Heart left ventricle (tissue), 16 donors: ENCODE measurements at regions of chr9 and their contacts with region 1.

Region 1: GRCh38 chr9:13427587-13427986 is 148.1 kb upstream of the MPDZ start:
- DNase-seq: no peak
- ATAC-seq: peak in 2 of 4 donors; percentile 42 to 47
- H3K4me3 ChIP-seq: peak overlapping the region in 1 of 12 donors; percentile 12
- H3K27ac ChIP-seq: peak overlapping the region in 9 of 12 donors; percentile 0 to 63 (median 33)
- H3K4me1 ChIP-seq: peaks cover 0 to 23% (median 13%) of the 10 kb centered on the region in 12 donors
- H3K27me3 ChIP-seq: no peaks in the 10 kb centered on the region
- CTCF ChIP-seq: peak; percentile 68 to 88 (median 82)
- POLR2A ChIP-seq: no peak

Region 2: DNA sequence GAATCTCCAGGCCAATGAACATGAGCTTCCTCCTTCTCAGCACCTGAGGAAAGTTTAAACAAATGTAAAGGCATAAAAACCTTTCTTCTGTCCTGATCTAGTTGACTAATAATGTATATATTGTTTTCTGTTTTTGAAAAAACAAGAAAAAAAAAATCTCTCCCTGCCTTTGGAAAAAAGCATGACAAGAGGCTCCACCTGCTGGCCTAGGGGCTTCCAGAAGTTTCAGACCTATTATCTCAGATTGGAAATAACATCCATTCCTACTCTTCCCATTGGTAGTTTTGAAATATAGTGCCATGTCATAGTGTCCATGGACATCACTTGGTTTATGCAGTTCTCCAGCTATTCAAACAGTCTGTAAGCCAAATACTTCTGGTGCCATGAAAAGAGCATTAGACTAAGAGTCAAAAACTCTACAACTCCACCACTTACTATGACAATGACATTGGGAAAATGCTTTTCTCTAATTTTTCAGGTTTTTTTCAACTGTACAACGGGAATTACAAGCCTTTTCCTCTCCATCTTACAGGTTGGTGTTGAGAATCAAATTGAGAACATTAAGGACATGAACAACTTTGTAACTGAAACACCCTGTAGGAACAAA is 261.5 kb after region 1 on chr9:
- intact Hi-C with region 1: loop called in 3 of 10 experiments (anchors 5 kb)
- DNase-seq: peak in 1 of 5 donors; percentile 32
- ATAC-seq: peak in 1 of 4 donors; percentile 23
- H3K4me3 ChIP-seq: no peak overlapping the region
- H3K27ac ChIP-seq: peak overlapping the region in 6 of 12 donors; percentile 1 to 33 (median 16)
- H3K4me1 ChIP-seq: peaks cover 0 to 30% (median 12%) of the 10 kb centered on the region in 12 donors
- H3K27me3 ChIP-seq: no peaks in the 10 kb centered on the region
- CTCF ChIP-seq: peak; percentile 35 to 64 (median 54)
- POLR2A ChIP-seq: no peak

Region 3: GRCh38 chr9:14107977-14108376 is 680.4 kb after region 1 on chr9:
- intact Hi-C with region 1: loop called in 1 of 10 experiments (anchors 10 kb)
- DNase-seq: no peak
- ATAC-seq: peak; percentile 77 to 95 (median 94)
- H3K4me3 ChIP-seq: no peak overlapping the region
- H3K27ac ChIP-seq: peak overlapping the region in 9 of 12 donors; percentile 18 to 68 (median 39)
- H3K4me1 ChIP-seq: peaks cover 0 to 51% (median 7%) of the 10 kb centered on the region in 12 donors
- H3K27me3 ChIP-seq: no peaks in the 10 kb centered on the region
- CTCF ChIP-seq: no peak
- POLR2A ChIP-seq: no peak

Region 4: DNA sequence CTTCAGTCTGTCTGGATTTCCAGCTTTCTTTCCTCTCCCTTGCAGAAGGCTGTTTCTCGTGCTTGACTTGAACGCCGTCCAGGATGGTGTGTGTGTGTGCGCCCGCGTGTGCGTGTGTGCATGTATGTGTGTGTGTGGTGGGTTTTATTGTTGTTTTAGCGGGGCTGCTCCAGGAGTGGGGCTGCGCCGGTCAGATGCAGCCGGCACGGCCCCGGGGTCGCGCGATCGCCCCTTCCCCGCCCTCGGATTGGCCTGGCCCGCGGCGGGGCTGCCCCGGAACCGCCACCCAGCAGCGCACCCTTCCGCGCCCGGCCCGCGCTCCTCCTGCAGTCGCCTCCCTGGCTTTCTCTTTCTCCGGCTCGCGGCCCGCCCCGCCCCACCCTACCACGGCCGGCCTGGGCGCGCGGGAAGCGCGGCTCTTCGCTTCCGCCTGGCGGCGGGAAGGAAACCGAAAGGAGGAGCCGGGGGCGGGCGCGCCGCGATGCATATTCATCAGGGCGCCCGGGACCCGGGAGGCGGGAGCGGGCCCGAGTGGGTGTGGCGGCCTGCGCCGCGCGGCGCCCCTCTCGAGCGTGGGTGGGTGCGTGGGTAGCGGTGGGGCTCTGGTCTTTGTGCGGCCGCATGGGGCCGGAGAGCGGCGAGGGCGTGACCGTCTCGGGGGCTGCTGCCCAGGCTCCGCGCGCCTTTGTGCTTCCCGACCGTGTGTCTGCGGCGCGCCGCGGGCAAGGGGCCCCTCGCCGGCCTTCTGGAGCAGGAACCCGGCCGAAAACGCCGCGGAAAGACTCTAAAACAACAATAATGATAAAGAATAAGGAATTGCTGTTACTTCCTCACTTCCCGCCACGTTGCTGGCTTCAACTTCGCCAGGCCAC is 894.9 kb after region 1 on chr9:
- intact Hi-C with region 1: loop called in 1 of 10 experiments (anchors 5 kb)
- DNase-seq: peak; percentile 94 to 96 (median 95)
- ATAC-seq: peak; percentile 86 to 96 (median 92)
- H3K4me3 ChIP-seq: peak overlapping the region; percentile 65 to 84 (median 78)
- H3K27ac ChIP-seq: peak overlapping the region; percentile 93 to 100 (median 98)
- H3K4me1 ChIP-seq: peaks cover 8 to 82% (median 44%) of the 10 kb centered on the region in 12 donors
- H3K27me3 ChIP-seq: peaks cover 0 to 6% (median 0%) of the 10 kb centered on the region in 9 donors
- CTCF ChIP-seq: peak; percentile 17 to 75 (median 60)
- POLR2A ChIP-seq: peak in 1 of 2 donors; percentile 55

Region 5: DNA sequence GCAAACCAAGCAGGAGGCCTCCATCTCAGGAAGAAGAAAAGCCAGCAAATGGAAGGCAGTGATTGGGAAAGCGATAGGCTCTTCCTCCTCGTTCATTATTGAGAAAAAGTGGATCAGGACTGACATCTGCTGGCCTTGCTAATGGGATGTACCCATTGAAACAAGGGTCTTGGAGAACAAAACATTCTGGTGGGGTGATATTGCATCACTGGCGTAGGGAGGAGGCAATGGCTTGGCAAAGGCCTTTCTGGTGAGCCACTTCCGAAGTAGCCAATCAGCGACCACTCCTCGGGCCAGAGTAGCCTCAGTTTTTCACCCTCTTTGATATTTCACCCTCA is 973.0 kb after region 1 on chr9:
- intact Hi-C with region 1: loop called in 9 of 10 experiments (anchors 2 to 10 kb)
- DNase-seq: peak in 4 of 5 donors; percentile 41 to 62 (median 50)
- ATAC-seq: peak; percentile 43 to 90 (median 86)
- H3K4me3 ChIP-seq: peak overlapping the region in 8 of 12 donors; percentile 8 to 38 (median 20)
- H3K27ac ChIP-seq: peak overlapping the region in 3 of 12 donors; percentile 5 to 24 (median 16)
- H3K4me1 ChIP-seq: peaks cover 0 to 22% (median 7%) of the 10 kb centered on the region in 12 donors
- H3K27me3 ChIP-seq: no peaks in the 10 kb centered on the region
- CTCF ChIP-seq: peak; percentile 12 to 78 (median 67)
- POLR2A ChIP-seq: no peak